ENCODE measurements at regions of chr4 and their contacts with region 1.

Region 1: DNA sequence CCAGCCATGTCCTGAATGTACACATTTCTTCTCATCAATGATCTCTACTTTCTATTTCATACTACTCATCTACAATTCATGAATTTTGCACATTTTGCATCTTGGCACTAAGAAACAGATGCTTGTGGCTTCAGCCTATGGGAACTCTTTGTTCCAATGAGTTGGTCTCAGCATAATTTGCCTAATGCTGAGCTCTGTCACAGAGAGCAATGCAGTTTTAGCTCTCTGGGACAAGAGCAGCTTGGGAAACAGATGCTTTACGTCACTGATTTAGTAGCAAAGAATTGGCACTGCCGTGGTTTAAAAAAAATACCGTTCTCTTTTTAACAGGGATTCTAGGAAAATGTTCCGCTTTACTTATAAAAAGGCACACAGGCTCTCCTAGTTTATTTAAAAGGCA is 162.4 kb downstream of the WDFY3 start:
- DNase-seq: no peak
- ATAC-seq: peak in 1 of 4 donors; percentile 63
- H3K4me3 ChIP-seq: no peak overlapping the region
- H3K27ac ChIP-seq: no peak overlapping the region
- H3K4me1 ChIP-seq: peaks cover 0 to 5% (median 0%) of the 10 kb centered on the region in 12 donors
- H3K27me3 ChIP-seq: no peaks in the 10 kb centered on the region
- CTCF ChIP-seq: no peak
- POLR2A ChIP-seq: no peak

Region 2: DNA sequence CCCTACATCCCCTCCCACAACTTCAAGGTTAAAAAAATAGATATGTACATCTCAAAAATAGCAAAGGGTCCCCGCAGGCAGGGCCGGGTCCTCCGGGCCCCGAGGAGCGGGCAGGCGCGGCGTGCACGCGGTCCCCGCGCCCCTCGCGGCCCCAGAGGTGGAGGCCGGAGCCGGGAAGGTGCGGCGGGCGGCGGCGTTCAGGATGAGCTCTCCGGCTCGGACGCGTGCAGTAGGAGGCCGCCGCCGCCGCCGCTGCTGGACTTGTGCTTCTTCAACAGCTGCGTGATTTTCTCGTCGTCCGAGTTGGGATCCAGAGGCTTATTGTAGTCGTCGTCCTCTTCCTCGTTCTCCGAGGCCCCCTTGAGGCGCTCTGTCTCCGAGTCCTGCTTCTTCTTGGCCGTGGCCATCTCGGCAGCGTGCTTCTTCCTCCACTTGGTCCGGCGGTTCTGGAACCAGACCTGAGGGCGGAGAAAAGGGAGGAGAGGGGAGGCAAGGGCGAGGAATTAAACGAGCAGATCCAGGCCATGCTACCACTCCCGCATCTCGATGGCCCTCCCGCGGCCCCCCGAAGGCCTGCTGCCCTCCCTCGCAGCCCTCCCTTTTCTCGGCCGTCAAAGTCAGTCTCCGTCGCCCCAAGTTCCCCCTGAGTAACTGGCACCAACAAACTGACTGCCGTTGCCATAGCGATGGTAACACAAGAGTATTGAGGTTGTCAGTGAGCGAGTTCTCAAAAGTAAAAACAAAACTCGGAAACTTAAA is 310.9 kb before region 1 on chr4:
- intact Hi-C with region 1: no loop called
- DNase-seq: no peak
- ATAC-seq: peak in 1 of 4 donors; percentile 26
- H3K4me3 ChIP-seq: peak overlapping the region in 3 of 12 donors; percentile 13 to 18 (median 16)
- H3K27ac ChIP-seq: no peak overlapping the region
- H3K4me1 ChIP-seq: peaks cover 0 to 33% (median 12%) of the 10 kb centered on the region in 12 donors
- H3K27me3 ChIP-seq: peaks cover 67 to 99% (median 96%) of the 10 kb centered on the region in 9 donors
- CTCF ChIP-seq: no peak
- POLR2A ChIP-seq: no peak

Region 3: GRCh38 chr4:84750253-84750959 is 53.7 kb before region 1 on chr4:
- intact Hi-C with region 1: loop called in 2 of 10 experiments (anchors 10 kb)
- DNase-seq: no peak
- ATAC-seq: peak in 3 of 4 donors; percentile 59 to 67 (median 62)
- H3K4me3 ChIP-seq: no peak overlapping the region
- H3K27ac ChIP-seq: no peak overlapping the region
- H3K4me1 ChIP-seq: peaks cover 0 to 28% (median 0%) of the 10 kb centered on the region in 12 donors
- H3K27me3 ChIP-seq: no peaks in the 10 kb centered on the region
- CTCF ChIP-seq: peak; percentile 55 to 83 (median 70)
- POLR2A ChIP-seq: no peak